Ovary (tissue), 10 donors: ENCODE measurements at regions of chr10 and their contacts with region 1.

Region 1: GRCh38 chr10:127906548-127907377 is at the start of gene PTPRE:
- DNase-seq: peak in 4 of 5 donors; percentile 34 to 71 (median 52)
- H3K4me3 ChIP-seq: peak within 1 kb of the TSS; percentile 41
- H3K27ac ChIP-seq: no peak within 1 kb of the TSS
- H3K4me1 ChIP-seq: peaks cover 3% of the 10 kb centered on the region
- H3K27me3 ChIP-seq: no peaks in the 10 kb centered on the region
- CTCF ChIP-seq: peak in 2 of 3 donors; percentile 70 to 90
- EP300 ChIP-seq: no peak
- POLR2A ChIP-seq: no peak
- total RNA-seq, gene PTPRE: 4.1 to 15.5 (median 7.4) TPM

Region 2: GRCh38 chr10:128011175-128011979 is 104.6 kb after region 1 on chr10:
- intact Hi-C with region 1: loop called in 2 of 4 experiments (anchors 5 kb)
- DNase-seq: peak; percentile 56 to 92 (median 79)
- H3K4me3 ChIP-seq: no peak overlapping the region
- H3K27ac ChIP-seq: no peak overlapping the region
- H3K4me1 ChIP-seq: no peaks in the 10 kb centered on the region
- H3K27me3 ChIP-seq: no peaks in the 10 kb centered on the region
- CTCF ChIP-seq: peak; percentile 56 to 88 (median 60)
- EP300 ChIP-seq: no peak
- POLR2A ChIP-seq: no peak

Region 3: GRCh38 chr10:128069351-128070051 is 162.7 kb after region 1 on chr10:
- intact Hi-C with region 1: loop called in 1 of 4 experiments (anchors 10 kb)
- DNase-seq: peak; percentile 41 to 79 (median 76)
- H3K4me3 ChIP-seq: no peak overlapping the region
- H3K27ac ChIP-seq: no peak overlapping the region
- H3K4me1 ChIP-seq: no peaks in the 10 kb centered on the region
- H3K27me3 ChIP-seq: no peaks in the 10 kb centered on the region
- CTCF ChIP-seq: peak; percentile 49 to 59 (median 55)
- EP300 ChIP-seq: no peak
- POLR2A ChIP-seq: no peak

Region 4: DNA sequence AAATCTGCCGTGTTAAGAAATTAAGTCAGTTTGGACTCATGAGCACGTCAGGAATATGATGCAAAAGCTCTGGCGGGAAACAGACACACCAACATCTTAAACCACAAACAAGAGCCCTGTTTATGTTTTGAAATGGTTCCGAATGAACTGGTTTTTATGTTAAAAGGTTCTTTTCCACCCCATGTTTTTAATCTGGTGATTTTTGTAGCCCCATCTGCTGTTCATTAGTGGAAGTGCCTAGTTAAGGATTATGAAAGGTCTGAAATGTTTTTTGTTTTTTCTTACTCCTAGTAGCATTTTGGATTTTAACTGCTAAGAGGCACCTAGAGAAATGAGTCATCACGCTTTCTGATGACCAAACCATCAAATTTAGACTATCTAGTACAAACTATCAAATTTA is 623.5 kb after region 1 on chr10:
- intact Hi-C with region 1: no loop called
- DNase-seq: no peak
- H3K4me3 ChIP-seq: no peak overlapping the region
- H3K27ac ChIP-seq: no peak overlapping the region
- H3K4me1 ChIP-seq: peaks cover 1% of the 10 kb centered on the region
- H3K27me3 ChIP-seq: no peaks in the 10 kb centered on the region
- CTCF ChIP-seq: no peak
- EP300 ChIP-seq: no peak
- POLR2A ChIP-seq: no peak